A549 (cell line): ENCODE measurements at regions of chr9 and their contacts with region 1.

Region 1: GRCh38 chr9:128370826-128371621 is at the start of gene URM1:
- DNase-seq: peak; percentile 94 to 97
- ATAC-seq: peak; percentile 96 to 98
- H3K4me3 ChIP-seq: peak within 1 kb of the TSS; percentile 83
- H3K27ac ChIP-seq: peak within 1 kb of the TSS; percentile 89 to 90
- H3K4me1 ChIP-seq: peaks cover 19% of the 10 kb centered on the region; the same call in 2 of the 3 replicates
- CTCF ChIP-seq: no peak; the same call in 1 of the 3 replicates
- EP300 ChIP-seq: no peak
- POLR2A ChIP-seq: peak; percentile 83
- RAD21 ChIP-seq: no peak
- polyA plus RNA-seq, gene URM1: 43.6 and 61.6 TPM in 2 replicates

Region 2: DNA sequence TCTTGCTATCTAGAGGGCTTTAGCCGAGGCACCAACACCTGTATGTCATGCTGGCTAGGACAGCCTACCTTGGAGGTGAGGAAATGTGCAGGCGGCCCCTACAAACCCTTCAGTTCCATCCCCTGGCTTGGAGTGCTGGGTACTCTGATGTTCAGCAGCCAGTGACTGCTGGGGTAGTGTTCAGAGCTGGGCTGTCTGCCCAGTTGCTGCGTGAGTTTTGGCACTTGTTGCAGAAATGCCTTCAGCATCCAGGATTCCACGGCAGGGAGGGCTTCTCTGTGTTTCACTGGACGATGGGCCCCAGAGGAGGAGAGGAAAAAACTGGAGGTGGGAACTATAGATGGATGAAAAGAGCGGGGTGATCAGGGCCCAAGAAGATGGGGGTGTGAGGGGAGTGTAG is 84.6 kb before region 1 on chr9:
- CTCF ChIA-PET with region 1: interaction called, 182 read pairs
- POLR2A ChIA-PET with region 1: interaction called, 10 read pairs
- DNase-seq: no peak
- ATAC-seq: no peak
- H3K4me3 ChIP-seq: no peak overlapping the region
- H3K27ac ChIP-seq: no peak overlapping the region
- H3K4me1 ChIP-seq: no peaks in the 10 kb centered on the region
- CTCF ChIP-seq: no peak
- EP300 ChIP-seq: no peak
- POLR2A ChIP-seq: no peak
- RAD21 ChIP-seq: no peak

Region 3: DNA sequence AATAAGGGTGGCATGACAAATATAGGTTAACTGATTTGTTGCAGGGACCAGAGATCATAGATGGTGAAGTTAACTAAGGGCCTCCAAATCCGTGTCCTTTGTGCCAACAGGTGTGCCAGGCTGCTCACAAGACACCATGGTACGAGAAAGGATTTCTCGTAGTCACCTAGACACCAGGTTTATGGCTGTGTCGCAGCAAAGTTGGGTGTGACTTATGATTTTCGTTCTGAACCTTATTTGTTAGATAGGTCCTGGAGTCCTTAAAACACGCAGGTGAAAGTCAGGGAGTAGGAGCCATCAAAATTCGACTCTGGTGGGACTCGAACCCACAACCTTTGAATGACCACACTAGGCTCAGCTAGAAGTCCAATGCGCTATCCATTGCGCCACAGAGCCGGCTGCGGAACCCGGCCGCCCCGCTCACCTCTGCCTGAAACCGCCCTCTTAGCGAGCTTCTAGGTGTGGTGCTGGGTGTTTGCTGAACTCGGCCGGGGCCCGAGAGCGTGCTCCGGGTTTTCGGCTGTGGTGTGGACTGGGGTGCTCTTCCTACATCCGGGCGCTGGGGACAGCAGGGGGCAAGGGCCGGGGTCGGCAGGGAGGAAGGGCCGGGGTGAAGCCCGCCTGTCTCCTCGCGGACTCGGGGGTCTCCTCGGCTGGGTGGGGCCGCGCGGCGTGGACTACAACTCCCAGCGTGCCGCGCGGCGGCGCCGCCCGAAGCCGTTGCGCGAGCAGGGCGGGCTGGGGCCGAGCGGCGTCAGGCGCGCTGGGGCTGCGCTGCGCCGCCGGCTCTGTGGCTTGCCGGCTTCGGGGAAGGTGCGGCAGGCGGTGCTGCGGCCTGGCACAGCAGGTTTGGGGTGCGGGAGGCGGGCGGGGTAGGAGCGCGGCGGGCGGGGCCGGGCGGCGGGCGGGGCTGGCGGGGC is 31.0 kb before region 1 on chr9 and contains the start of gene SLC27A4:
- CTCF ChIA-PET with region 1: interaction called, 13 read pairs
- POLR2A ChIA-PET with region 1: interaction called, 4 read pairs
- DNase-seq: peak; percentile 81 to 93
- ATAC-seq: peak; percentile 86 to 89
- H3K4me3 ChIP-seq: peak within 1 kb of the TSS; percentile 90
- H3K27ac ChIP-seq: peak within 1 kb of the TSS; percentile 89 to 92
- H3K4me1 ChIP-seq: 0 out of 3 replicates have a peak, but pooled peaks cover 4% of the 10 kb centered on the region
- CTCF ChIP-seq: no peak
- EP300 ChIP-seq: no peak
- POLR2A ChIP-seq: peak; percentile 57
- RAD21 ChIP-seq: no peak
- polyA plus RNA-seq, gene SLC27A4: 14.5 and 14.9 TPM in 2 replicates

Region 4: GRCh38 chr9:128412120-128412790 is 41.2 kb after region 1 on chr9:
- CTCF ChIA-PET with region 1: interaction called, 17 read pairs
- POLR2A ChIA-PET with region 1: no interaction called
- DNase-seq: peak; percentile 30 to 52
- ATAC-seq: peak in 1 of 2 experiments; percentile 71; a peak in 3 of 6 replicates
- H3K4me3 ChIP-seq: no peak overlapping the region
- H3K27ac ChIP-seq: no peak overlapping the region; a peak in 1 of 6 replicates
- H3K4me1 ChIP-seq: no peaks in the 10 kb centered on the region
- CTCF ChIP-seq: peak; percentile 42; the same call in 2 of the 3 replicates
- EP300 ChIP-seq: no peak
- POLR2A ChIP-seq: no peak
- RAD21 ChIP-seq: peak; percentile 60 to 79

Region 5: DNA sequence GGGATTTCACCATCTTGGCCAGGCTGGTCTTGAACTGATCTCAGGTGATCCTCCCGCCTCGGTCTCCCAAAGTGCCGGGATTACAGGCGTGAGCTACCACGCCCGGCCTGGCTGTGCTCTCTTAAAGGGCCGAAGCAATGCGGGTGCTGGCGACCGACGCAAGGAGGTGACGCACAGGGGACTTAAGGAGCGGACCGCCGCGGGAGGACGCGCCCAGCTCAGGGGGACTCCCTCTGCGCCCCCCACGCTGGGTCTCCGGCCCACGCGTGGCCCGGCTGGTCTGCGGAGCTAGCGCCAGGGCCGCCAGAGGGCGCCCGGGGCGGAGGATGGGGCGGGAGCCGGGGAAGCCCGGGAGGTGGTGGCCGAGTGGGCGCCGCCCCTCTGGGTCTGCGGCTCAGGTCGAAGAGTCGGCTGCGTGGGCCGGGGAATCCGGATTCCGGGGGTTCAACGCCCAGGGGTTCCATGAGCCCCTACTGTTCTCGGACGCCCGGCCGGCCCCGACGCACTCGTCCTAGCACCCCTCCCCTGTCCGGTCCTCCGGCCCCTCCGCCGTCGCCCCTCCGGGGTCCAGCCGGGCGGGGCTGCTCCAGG is 49.1 kb after region 1 on chr9:
- CTCF ChIA-PET with region 1: interaction called, 49 read pairs
- POLR2A ChIA-PET with region 1: interaction called, 18 read pairs
- DNase-seq: peak; percentile 60 to 71
- ATAC-seq: peak; percentile 88
- H3K4me3 ChIP-seq: peak overlapping the region; percentile 80
- H3K27ac ChIP-seq: peak overlapping the region; percentile 84 to 95
- H3K4me1 ChIP-seq: peaks cover 17% of the 10 kb centered on the region; the same call in 2 of the 3 replicates
- CTCF ChIP-seq: peak; percentile 91
- EP300 ChIP-seq: no peak
- POLR2A ChIP-seq: peak; percentile 28
- RAD21 ChIP-seq: peak; percentile 24 to 45; a peak in 3 of 5 replicates